ENCODE measurements at regions of chr11 and their contacts with region 1.

Region 1: DNA sequence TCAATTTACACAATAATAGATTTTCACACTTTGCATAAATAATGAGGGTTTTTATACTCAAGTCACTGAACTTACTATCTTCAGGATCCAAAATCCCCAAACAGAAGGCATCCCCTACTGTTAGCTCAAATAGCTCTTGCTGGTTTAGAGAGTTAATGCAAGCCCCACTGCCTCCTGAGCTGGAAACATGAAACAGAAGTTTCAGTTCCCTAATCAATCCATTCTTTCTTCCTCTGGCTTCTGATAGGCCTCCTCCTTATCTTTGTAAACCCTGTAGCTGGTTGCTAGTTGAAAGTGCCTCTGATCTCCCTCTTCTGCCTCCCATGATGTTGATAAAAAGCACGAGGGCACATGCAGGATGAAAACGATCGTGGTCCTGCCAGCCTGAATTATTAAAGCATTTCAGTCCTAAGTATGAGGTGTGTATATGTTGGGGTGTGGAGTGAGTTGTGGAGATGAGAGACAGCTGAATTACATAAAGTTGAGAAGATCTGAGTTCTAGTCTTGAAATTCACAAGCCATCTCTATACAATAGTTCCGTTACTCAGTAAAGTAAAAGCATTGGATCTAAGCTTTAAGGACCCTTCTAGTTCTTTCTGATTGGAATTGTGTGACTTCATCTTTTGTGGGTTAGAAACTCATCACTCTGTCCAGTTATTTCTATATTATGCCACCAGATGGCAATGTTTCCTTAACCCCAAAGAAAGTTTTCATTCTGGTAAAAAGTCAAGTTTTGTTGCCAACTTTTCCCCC is 35.0 kb upstream of the EHF start:
- DNase-seq: peak; percentile 55
- H3K4me3 ChIP-seq: no peak overlapping the region
- H3K27ac ChIP-seq: no peak overlapping the region
- H3K4me1 ChIP-seq: no peaks in the 10 kb centered on the region
- H3K27me3 ChIP-seq: peaks cover 5 to 11% of the 10 kb centered on the region in 2 experiments
- CTCF ChIP-seq: peak; percentile 36 to 38
- POLR2A ChIP-seq: no peak

Region 2: DNA sequence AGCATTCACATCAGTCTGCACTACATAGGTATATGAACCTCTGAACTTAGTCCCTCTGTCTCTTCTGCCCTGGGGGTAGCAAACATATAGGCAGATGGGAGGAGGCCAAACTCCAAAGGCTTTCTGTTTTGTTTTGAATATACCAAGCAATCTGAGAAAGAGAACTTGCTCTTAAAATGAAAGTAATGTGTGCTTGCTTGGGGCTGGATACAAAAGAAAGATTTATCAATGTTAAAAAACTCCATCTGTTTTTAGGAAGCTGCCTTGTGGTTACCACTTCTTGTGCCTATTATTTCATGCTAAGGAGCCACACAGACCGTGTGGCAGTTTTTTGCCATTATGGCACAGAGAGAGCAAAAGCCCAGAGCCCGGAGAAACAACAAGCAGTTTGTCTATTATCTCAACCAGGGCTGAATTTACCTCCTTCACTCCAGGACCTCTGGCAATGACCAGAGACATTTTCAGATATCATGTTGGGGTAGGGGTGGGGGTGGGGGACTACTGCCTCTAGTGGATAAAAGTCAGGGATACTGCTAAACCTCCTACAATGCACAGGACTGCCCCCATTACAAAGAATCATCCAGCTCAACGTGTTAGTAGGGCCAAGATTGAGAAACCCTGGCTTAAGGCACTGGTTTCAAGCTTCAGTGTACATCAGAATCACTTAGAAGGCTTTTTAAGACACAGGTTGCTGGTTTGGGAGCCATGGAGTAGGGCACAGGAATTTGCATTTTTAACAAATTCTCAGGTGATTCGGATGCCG is 206.1 kb after region 1 on chr11:
- CTCF ChIA-PET with region 1: interaction called, 35 read pairs
- POLR2A ChIA-PET with region 1: no interaction called
- dilution Hi-C with region 1: no loop called
- intact Hi-C with region 1: loop called (anchors 1 kb)
- DNase-seq: peak; percentile 27
- H3K4me3 ChIP-seq: no peak overlapping the region
- H3K27ac ChIP-seq: no peak overlapping the region
- H3K4me1 ChIP-seq: peaks cover 13% of the 10 kb centered on the region
- H3K27me3 ChIP-seq: no peaks in the 10 kb centered on the region
- CTCF ChIP-seq: peak in 1 of 2 donors; percentile 11
- POLR2A ChIP-seq: no peak

Region 3: GRCh38 chr11:34890812-34891211 is 304.9 kb after region 1 on chr11:
- CTCF ChIA-PET with region 1: interaction called, 90 read pairs
- POLR2A ChIA-PET with region 1: no interaction called
- dilution Hi-C with region 1: no loop called
- intact Hi-C with region 1: loop called (anchors 1 kb)
- DNase-seq: peak; percentile 58
- H3K4me3 ChIP-seq: no peak overlapping the region
- H3K27ac ChIP-seq: no peak overlapping the region
- H3K4me1 ChIP-seq: no peaks in the 10 kb centered on the region
- H3K27me3 ChIP-seq: no peaks in the 10 kb centered on the region
- CTCF ChIP-seq: peak in 1 of 2 donors; percentile 12
- POLR2A ChIP-seq: no peak

Region 4: GRCh38 chr11:34916015-34916842 is 330.3 kb after region 1 on chr11 and contains the starts of genes APIP and PDHX:
- CTCF ChIA-PET with region 1: interaction called, 19 read pairs
- POLR2A ChIA-PET with region 1: no interaction called
- dilution Hi-C with region 1: no loop called
- intact Hi-C with region 1: no loop called
- DNase-seq: peak; percentile 98
- H3K4me3 ChIP-seq: peak within 1 kb of the TSS; percentile 67 to 89 (median 80)
- H3K27ac ChIP-seq: peak within 1 kb of the TSS; percentile 88
- H3K4me1 ChIP-seq: peaks cover 15% of the 10 kb centered on the region
- H3K27me3 ChIP-seq: no peaks in the 10 kb centered on the region
- CTCF ChIP-seq: no peak
- POLR2A ChIP-seq: peak; percentile 98
- total RNA-seq, gene APIP: 25.9 and 26.9 TPM in 2 replicates
- total RNA-seq, gene PDHX: 30.5 and 33.2 TPM in 2 replicates

Region 5: DNA sequence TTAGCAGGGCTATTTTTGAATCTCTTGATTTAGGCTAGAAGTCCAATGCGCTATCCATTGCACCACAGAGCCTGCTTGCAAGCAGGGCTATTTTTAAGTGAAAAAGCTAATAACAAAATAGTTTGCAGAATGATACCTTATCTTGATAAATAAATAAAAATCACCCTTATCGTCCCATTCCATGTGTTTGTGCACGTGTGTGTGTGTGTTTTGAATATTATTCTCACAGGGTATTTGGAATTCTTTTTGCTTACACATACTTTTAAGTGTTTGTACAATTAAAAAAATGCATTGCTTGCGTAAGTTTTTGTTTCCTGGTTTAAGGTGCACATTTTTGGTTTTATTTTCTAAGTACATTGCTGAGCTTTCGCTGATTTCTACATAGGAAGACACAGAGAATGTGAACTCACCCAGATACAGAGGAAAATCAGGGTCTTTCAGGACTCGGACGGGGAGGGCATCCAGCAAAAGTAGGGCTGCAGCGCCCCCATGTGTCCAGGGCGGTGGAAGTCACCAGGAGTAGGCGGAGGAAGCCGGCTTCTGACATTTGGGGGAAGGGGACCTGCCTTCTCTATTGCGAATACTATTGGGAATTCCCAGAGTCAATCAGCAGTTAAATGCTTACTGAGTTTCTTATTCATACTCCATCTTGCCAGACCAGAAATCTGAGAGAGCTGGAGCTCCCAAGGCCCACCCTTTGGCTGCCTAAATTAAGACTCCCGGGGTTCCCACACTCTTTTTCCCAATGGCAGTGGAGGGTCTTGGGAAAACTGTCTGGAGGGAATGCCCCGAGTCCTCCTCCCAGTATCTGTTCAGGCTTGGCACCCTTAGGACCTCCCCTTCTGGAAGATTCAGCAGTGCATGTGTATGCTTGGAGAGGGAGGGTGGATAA is 806.3 kb after region 1 on chr11:
- CTCF ChIA-PET with region 1: interaction called, 46 read pairs
- POLR2A ChIA-PET with region 1: no interaction called
- dilution Hi-C with region 1: no loop called
- intact Hi-C with region 1: loop called (anchors 1 kb)
- DNase-seq: peak; percentile 62
- H3K4me3 ChIP-seq: no peak overlapping the region
- H3K27ac ChIP-seq: no peak overlapping the region
- H3K4me1 ChIP-seq: no peaks in the 10 kb centered on the region
- H3K27me3 ChIP-seq: peaks cover 10 to 14% of the 10 kb centered on the region in 2 experiments
- CTCF ChIP-seq: peak; percentile 80 to 81
- POLR2A ChIP-seq: no peak

Measured in endothelial cell of umbilical vein (primary cell).